ENCODE measurements at regions of chr3 and their contacts with region 1.

Region 1: DNA sequence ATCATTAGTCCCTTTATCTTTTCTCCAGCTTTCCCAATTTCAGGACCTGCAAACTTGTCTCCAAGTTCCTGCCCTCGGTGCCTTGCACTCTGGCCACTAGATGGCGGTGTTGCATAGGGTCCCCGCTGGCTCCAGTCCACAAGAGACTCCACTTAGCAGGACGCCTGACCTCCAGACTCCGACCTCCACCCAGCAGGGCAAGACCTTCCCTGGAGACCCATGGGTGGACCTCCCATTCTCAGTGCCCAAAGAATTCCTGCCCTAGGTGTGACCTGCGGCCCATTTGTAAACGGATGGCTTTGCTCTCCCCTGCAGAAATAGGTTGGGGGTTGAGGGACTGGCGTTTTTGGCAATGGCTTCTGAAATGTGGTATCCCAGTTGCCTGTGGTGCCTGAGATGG is 82.6 kb downstream of the LSM3 start:
- H3K4me3 ChIP-seq: no peak overlapping the region
- H3K27ac ChIP-seq: no peak overlapping the region
- H3K4me1 ChIP-seq: peaks cover 5% of the 10 kb centered on the region; the same call in 1 of the 2 replicates
- CTCF ChIP-seq: peak; percentile 84

Region 2: DNA sequence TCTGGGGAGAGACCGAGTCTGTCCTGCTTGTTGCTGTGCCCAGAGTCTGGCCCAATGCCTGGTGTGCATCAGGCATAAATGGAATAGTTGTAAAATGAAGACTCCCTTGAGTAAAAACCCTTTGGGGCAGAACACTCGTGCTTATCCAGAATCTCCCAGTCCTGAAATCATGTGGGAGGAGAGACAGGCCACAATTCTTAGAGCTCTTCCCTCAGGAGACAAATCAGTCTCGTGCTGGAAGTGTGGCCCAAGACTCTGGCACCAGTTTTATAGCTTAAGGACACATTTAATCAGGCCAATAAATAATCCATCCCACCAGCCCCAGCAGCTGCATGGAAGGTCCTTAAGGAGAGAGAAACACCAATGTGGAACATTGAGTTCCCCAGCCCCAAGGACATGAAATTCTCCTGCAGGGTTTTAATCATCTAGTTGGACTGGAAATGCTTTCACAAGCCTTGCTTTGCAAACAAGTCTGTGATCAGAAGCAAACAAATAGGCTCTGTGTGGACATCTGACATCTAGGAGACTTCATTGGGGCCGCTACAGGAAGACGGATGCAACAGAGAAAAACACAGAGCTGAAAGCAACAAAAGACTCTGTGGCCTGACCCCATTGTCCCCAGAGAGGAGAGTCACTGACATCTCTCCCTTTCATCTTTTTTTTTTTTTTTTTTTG is 12.2 kb before region 1 on chr3:
- CTCF ChIA-PET with region 1: interaction called, 13 read pairs
- POLR2A ChIA-PET with region 1: no interaction called
- H3K4me3 ChIP-seq: no peak overlapping the region
- H3K27ac ChIP-seq: no peak overlapping the region
- H3K4me1 ChIP-seq: no peaks in the 10 kb centered on the region
- CTCF ChIP-seq: no peak

Region 3: DNA sequence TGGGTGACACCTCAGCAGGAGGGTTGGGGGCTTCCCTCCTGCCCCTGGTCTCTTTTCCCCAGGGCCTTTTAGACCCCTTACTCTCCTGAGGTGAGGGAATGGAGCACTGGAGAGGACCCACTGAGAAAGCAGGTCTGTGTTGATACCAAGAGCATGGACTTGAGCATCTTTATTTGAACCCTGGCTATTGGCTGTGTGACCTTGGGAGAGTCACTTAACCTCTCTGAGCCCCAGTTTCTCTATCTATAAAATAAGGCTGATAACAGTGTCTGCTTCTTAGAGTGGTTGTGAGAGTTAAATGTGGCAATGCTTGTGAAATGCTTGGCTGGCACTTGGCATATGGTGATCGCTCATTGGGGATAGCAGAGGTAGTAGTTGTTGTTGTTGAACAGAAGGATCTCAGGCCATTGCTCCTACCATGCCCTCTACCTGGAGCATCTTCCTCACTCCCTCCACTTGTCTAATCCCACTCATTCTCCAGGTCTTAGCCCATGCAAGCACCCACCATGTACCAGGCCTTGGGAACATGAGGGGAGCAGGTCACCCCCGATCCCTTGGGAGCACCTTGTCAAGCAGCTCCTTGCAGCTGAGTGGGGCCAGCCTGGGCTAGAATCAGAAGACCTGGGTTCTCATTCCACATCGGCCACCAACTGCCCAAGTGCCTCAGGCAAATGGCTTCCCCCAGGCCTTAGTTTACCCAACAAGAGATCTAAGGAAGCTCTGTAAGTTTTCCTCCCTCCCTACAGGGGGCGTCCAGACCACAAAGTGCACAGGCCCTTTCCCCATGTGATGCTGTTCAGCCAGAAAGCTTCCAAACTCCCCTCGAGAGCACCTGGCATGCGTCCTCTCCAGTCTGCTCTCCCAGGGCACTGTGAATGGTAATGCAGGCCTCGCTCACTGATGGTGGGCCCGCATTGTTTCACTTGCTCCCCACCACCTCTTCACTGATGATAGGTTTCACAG is 14.1 kb after region 1 on chr3:
- CTCF ChIA-PET with region 1: interaction called, 18 read pairs
- POLR2A ChIA-PET with region 1: no interaction called
- H3K4me3 ChIP-seq: no peak overlapping the region
- H3K27ac ChIP-seq: no peak overlapping the region
- H3K4me1 ChIP-seq: no peaks in the 10 kb centered on the region
- CTCF ChIP-seq: no peak

Region 4: GRCh38 chr3:14307656-14308302 is 46.5 kb after region 1 on chr3:
- CTCF ChIA-PET with region 1: no interaction called
- POLR2A ChIA-PET with region 1: no interaction called
- H3K4me3 ChIP-seq: no peak overlapping the region
- H3K27ac ChIP-seq: no peak overlapping the region
- H3K4me1 ChIP-seq: no peaks in the 10 kb centered on the region
- CTCF ChIP-seq: no peak

Region 5: DNA sequence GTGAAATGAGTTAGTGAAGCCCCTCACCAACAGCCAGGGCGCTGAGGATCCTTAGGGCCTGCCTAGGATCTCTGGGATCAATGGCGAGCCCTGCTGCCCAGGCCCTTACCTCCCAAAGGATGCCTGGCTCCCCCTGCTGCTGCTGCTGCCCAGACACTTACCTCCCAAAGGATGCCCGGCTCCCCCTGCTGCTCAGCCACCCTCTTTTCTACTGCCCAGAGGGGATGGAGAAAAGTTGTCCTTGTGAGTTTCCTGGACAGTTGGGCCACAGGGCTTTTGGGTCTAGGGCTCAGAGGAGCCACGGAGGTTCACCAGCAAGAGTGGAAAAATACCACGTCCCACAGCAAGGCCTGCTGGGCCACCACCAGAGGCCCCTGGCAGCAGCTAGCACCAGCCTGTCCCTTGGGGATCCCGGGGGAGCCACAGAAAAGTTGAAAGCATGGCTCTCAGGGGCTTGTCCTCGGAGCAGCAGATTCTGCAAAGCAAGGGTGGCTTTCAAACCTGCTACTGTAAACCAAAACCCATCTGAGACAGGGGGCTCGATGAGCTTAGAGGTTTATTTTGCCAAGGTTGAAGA is 200.6 kb after region 1 on chr3:
- CTCF ChIA-PET with region 1: interaction called, 163 read pairs
- POLR2A ChIA-PET with region 1: no interaction called
- H3K4me3 ChIP-seq: no peak overlapping the region
- H3K27ac ChIP-seq: no peak overlapping the region
- H3K4me1 ChIP-seq: no peaks in the 10 kb centered on the region; the same call in 1 of the 2 replicates
- CTCF ChIP-seq: peak; percentile 98

Region 6: DNA sequence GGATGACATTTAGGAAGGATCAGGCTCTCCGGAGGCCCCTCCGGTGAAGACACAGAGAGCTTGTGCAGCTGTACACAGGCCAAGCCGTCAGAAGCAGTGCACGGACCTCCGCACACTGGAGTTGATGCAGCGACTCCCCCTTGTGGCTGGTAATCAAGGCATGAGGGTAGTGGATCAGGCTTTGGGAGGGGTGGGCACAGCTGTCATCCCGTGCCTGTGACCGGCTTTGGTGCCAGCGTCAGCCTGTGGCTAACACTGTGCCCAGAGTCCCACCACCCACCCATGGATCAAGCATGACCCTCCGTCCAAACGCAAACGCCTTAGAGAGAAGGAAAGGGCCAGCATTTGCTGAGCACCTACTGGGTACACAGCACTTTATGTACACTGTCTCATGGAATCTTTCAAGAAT is 287.1 kb after region 1 on chr3:
- CTCF ChIA-PET with region 1: interaction called, 12 read pairs
- POLR2A ChIA-PET with region 1: no interaction called
- H3K4me3 ChIP-seq: no peak overlapping the region
- H3K27ac ChIP-seq: no peak overlapping the region
- H3K4me1 ChIP-seq: no peaks in the 10 kb centered on the region
- CTCF ChIP-seq: peak; percentile 80

Measured in HEK293 (cell line).